CD8-positive, alpha-beta T cell (primary cell): ENCODE measurements at regions of chr2 and their contacts with region 1.

Region 1: GRCh38 chr2:65129826-65130663 is at the start of gene RAB1A:
- DNase-seq: peak; percentile 98 to 100 (median 99)
- ATAC-seq: peak; percentile 94
- H3K4me3 ChIP-seq: peak within 1 kb of the TSS; percentile 87 to 88
- H3K4me3 Mint-ChIP-seq: peak within 1 kb of the TSS; percentile 99
- H3K27ac ChIP-seq: peak within 1 kb of the TSS; percentile 91 to 97
- H3K27ac Mint-ChIP-seq: peak within 1 kb of the TSS; percentile 98
- H3K4me1 ChIP-seq: peaks cover 40% of the 10 kb centered on the region
- H3K4me1 Mint-ChIP-seq: peaks cover 44% of the 10 kb centered on the region
- H3K27me3 ChIP-seq: no peaks in the 10 kb centered on the region
- H3K27me3 Mint-ChIP-seq: no peaks in the 10 kb centered on the region
- CTCF ChIP-seq: no peak
- total RNA-seq, gene RAB1A: 101 to 103 TPM

Region 2: GRCh38 chr2:64562148-64562784 is 567.8 kb before region 1 on chr2:
- CTCF ChIA-PET with region 1: no interaction called
- POLR2A ChIA-PET with region 1: no interaction called
- intact Hi-C with region 1: no loop called
- DNase-seq: peak in 2 of 9 experiments; percentile 46 to 61
- ATAC-seq: peak; percentile 78
- H3K4me3 ChIP-seq: no peak overlapping the region
- H3K4me3 Mint-ChIP-seq: no peak overlapping the region
- H3K27ac ChIP-seq: no peak overlapping the region
- H3K27ac Mint-ChIP-seq: no peak overlapping the region
- H3K4me1 ChIP-seq: peaks cover 14% of the 10 kb centered on the region
- H3K4me1 Mint-ChIP-seq: peaks cover 30% of the 10 kb centered on the region
- H3K27me3 ChIP-seq: no peaks in the 10 kb centered on the region
- H3K27me3 Mint-ChIP-seq: no peaks in the 10 kb centered on the region
- CTCF ChIP-seq: peak; percentile 58

Region 3: GRCh38 chr2:64988420-64989125 is 141.5 kb before region 1 on chr2:
- CTCF ChIA-PET with region 1: no interaction called
- POLR2A ChIA-PET with region 1: interaction called, 3 read pairs
- intact Hi-C with region 1: loop called in 1 of 2 experiments (anchors 2 kb)
- DNase-seq: peak; percentile 10 to 82 (median 51)
- ATAC-seq: peak; percentile 41
- H3K4me3 ChIP-seq: peak overlapping the region; percentile 57 to 68
- H3K4me3 Mint-ChIP-seq: peak overlapping the region; percentile 77
- H3K27ac ChIP-seq: peak overlapping the region; percentile 31 to 36
- H3K27ac Mint-ChIP-seq: no peak overlapping the region
- H3K4me1 ChIP-seq: peaks cover 11% of the 10 kb centered on the region
- H3K4me1 Mint-ChIP-seq: peaks cover 27% of the 10 kb centered on the region
- H3K27me3 ChIP-seq: no peaks in the 10 kb centered on the region
- H3K27me3 Mint-ChIP-seq: peaks cover 7% of the 10 kb centered on the region
- CTCF ChIP-seq: no peak

Region 4: DNA sequence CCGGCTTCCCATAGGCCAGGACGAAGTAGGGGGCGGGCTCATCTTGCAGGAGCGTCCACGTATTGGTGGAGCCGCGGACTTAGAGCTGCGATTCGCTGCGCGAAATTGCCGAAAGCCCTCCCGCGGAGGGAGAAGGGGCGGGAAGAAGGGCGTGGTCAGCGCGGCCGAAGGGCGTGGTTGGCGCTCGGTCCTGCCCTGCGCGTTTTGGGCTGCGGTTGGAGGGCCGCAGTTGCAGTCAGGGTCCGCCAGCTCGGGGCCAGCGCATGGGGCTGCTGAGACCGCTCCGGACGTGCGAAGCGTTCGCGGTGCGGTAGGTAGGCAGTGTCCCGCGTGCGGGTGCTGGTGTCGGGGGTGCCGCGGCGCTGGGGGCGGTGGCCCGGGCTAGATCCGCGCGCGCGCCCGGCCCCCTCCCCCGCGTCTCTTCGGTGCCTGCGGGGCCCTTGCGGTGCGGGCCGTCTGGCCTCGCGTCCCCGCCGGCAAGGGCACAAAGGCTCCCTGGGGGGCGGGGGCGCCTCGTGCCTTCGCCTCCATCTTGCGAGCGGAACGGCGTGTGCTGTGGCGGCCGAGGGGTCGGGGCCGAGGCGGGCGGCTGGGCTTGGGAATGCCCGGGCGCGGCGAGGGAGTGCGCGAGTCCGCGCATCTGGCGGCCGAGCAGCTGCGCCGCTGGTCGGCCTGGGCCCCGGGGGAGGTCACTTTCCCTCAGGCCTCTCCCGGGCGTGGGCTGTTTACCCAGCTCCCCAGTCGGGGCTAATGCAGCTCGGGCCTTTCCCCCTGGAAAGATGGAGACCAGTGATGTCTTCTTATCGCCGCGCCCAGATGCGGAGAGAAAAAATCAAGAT is 73.6 kb before region 1 on chr2 and contains the start of gene CEP68:
- CTCF ChIA-PET with region 1: interaction called, 12 read pairs
- POLR2A ChIA-PET with region 1: interaction called, 51 read pairs
- intact Hi-C with region 1: loop called (anchors 1 kb)
- DNase-seq: peak; percentile 89 to 98 (median 96)
- ATAC-seq: peak; percentile 89
- H3K4me3 ChIP-seq: peak within 1 kb of the TSS; percentile 85 to 86
- H3K4me3 Mint-ChIP-seq: peak within 1 kb of the TSS; percentile 99
- H3K27ac ChIP-seq: peak within 1 kb of the TSS; percentile 62 to 72
- H3K27ac Mint-ChIP-seq: peak within 1 kb of the TSS; percentile 97
- H3K4me1 ChIP-seq: peaks cover 70% of the 10 kb centered on the region
- H3K4me1 Mint-ChIP-seq: peaks cover 73% of the 10 kb centered on the region
- H3K27me3 ChIP-seq: no peaks in the 10 kb centered on the region
- H3K27me3 Mint-ChIP-seq: no peaks in the 10 kb centered on the region
- CTCF ChIP-seq: no peak
- total RNA-seq, gene CEP68: 19.9 to 20.5 TPM

Region 5: DNA sequence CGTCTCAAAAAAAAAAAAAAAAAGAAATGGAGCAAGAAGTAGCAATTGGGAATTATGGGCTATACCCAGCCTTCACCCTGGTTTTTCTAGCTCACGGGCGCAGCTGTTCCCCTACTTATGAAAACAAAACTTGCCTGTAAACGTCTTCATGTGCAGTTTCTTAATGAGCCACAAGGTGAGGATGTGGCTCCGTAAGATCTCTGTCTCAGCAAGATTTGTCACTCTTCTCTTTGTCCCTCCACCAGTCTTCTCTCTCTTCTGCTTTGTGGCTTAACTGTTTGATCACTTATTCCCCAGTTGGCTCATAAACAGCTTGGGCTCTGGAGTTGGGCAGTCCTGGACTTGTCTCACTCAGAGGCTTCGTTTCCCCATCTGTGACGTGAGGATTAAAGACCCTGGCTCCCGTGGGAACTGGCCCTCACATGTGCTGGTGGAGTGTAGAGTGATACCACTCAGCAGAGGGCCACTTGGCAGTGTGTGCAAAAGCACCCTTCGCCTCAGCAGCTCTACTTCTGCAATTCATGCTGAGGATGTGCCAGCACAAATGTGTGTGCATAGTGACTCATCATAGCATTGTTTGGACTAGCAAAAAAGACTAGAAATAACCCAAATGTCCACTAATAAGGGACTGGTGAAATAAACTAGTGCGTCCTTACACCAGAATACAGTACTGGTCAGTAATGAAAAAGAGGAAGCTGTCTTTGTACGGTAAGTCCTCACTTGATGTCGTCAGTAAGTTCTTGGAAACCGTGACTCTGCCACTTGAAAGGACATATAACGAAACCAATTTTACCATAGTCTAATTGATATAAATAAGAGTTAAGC is 65.1 kb before region 1 on chr2:
- CTCF ChIA-PET with region 1: interaction called, 8 read pairs
- POLR2A ChIA-PET with region 1: interaction called, 6 read pairs
- intact Hi-C with region 1: loop called in 1 of 2 experiments (anchors 2 kb)
- DNase-seq: peak in 7 of 9 experiments; percentile 15 to 81 (median 43)
- ATAC-seq: peak; percentile 96
- H3K4me3 ChIP-seq: no peak overlapping the region
- H3K4me3 Mint-ChIP-seq: no peak overlapping the region
- H3K27ac ChIP-seq: no peak overlapping the region
- H3K27ac Mint-ChIP-seq: peak overlapping the region; percentile 41
- H3K4me1 ChIP-seq: peaks cover 42% of the 10 kb centered on the region
- H3K4me1 Mint-ChIP-seq: peaks cover 50% of the 10 kb centered on the region
- H3K27me3 ChIP-seq: no peaks in the 10 kb centered on the region
- H3K27me3 Mint-ChIP-seq: no peaks in the 10 kb centered on the region
- CTCF ChIP-seq: peak; percentile 78

Region 6: GRCh38 chr2:65092791-65093190 is 37.3 kb before region 1 on chr2:
- CTCF ChIA-PET with region 1: no interaction called
- POLR2A ChIA-PET with region 1: interaction called, 3 read pairs
- intact Hi-C with region 1: loop called (anchors 5 kb)
- DNase-seq: no peak
- ATAC-seq: no peak
- H3K4me3 ChIP-seq: no peak overlapping the region
- H3K4me3 Mint-ChIP-seq: no peak overlapping the region
- H3K27ac ChIP-seq: no peak overlapping the region
- H3K27ac Mint-ChIP-seq: peak overlapping the region; percentile 10
- H3K4me1 ChIP-seq: no peaks in the 10 kb centered on the region
- H3K4me1 Mint-ChIP-seq: peaks cover 30% of the 10 kb centered on the region
- H3K27me3 ChIP-seq: no peaks in the 10 kb centered on the region
- H3K27me3 Mint-ChIP-seq: no peaks in the 10 kb centered on the region
- CTCF ChIP-seq: no peak

Region 7: GRCh38 chr2:65169760-65170136 is 39.7 kb after region 1 on chr2:
- CTCF ChIA-PET with region 1: interaction called, 7 read pairs
- POLR2A ChIA-PET with region 1: no interaction called
- intact Hi-C with region 1: loop called in 1 of 2 experiments (anchors 2 kb)
- DNase-seq: no peak
- ATAC-seq: no peak
- H3K4me3 ChIP-seq: no peak overlapping the region
- H3K4me3 Mint-ChIP-seq: no peak overlapping the region
- H3K27ac ChIP-seq: no peak overlapping the region
- H3K27ac Mint-ChIP-seq: no peak overlapping the region
- H3K4me1 ChIP-seq: no peaks in the 10 kb centered on the region
- H3K4me1 Mint-ChIP-seq: peaks cover 2% of the 10 kb centered on the region
- H3K27me3 ChIP-seq: no peaks in the 10 kb centered on the region
- H3K27me3 Mint-ChIP-seq: no peaks in the 10 kb centered on the region
- CTCF ChIP-seq: no peak

Region 8: GRCh38 chr2:65227425-65228262 is 97.6 kb after region 1 on chr2 and contains the start of gene ACTR2:
- CTCF ChIA-PET with region 1: no interaction called
- POLR2A ChIA-PET with region 1: interaction called, 25 read pairs
- intact Hi-C with region 1: loop called (anchors 1 kb)
- DNase-seq: peak; percentile 87 to 98 (median 94)
- ATAC-seq: peak; percentile 94
- H3K4me3 ChIP-seq: peak within 1 kb of the TSS; percentile 74 to 89
- H3K4me3 Mint-ChIP-seq: peak within 1 kb of the TSS; percentile 99
- H3K27ac ChIP-seq: peak within 1 kb of the TSS; percentile 94 to 98
- H3K27ac Mint-ChIP-seq: peak within 1 kb of the TSS; percentile 99
- H3K4me1 ChIP-seq: peaks cover 43% of the 10 kb centered on the region
- H3K4me1 Mint-ChIP-seq: peaks cover 47% of the 10 kb centered on the region
- H3K27me3 ChIP-seq: no peaks in the 10 kb centered on the region
- H3K27me3 Mint-ChIP-seq: no peaks in the 10 kb centered on the region
- CTCF ChIP-seq: no peak
- total RNA-seq, gene ACTR2: 101 to 117 TPM